ENCODE measurements at regions of chr13 and their contacts with region 1.

Region 1: GRCh38 chr13:26985285-26985878 is 186.2 kb downstream of the USP12 start:
- DNase-seq: peak; percentile 59 to 91 (median 74)
- H3K4me3 ChIP-seq: no peak overlapping the region
- H3K27ac ChIP-seq: no peak overlapping the region
- H3K4me1 ChIP-seq: no peaks in the 10 kb centered on the region
- H3K27me3 ChIP-seq: peaks cover 8% of the 10 kb centered on the region
- CTCF ChIP-seq: peak; percentile 50 to 94 (median 88)
- POLR2A ChIP-seq: no peak

Region 2: GRCh38 chr13:27006519-27007161 is 21.3 kb after region 1 on chr13:
- intact Hi-C with region 1: no loop called
- DNase-seq: peak in 1 of 7 donors; percentile 55
- H3K4me3 ChIP-seq: peak overlapping the region in 1 of 4 donors; percentile 42
- H3K27ac ChIP-seq: no peak overlapping the region
- H3K4me1 ChIP-seq: peaks cover 0 to 3% of the 10 kb centered on the region in 2 donors
- H3K27me3 ChIP-seq: peaks cover 18% of the 10 kb centered on the region
- CTCF ChIP-seq: no peak
- POLR2A ChIP-seq: no peak

Region 3: DNA sequence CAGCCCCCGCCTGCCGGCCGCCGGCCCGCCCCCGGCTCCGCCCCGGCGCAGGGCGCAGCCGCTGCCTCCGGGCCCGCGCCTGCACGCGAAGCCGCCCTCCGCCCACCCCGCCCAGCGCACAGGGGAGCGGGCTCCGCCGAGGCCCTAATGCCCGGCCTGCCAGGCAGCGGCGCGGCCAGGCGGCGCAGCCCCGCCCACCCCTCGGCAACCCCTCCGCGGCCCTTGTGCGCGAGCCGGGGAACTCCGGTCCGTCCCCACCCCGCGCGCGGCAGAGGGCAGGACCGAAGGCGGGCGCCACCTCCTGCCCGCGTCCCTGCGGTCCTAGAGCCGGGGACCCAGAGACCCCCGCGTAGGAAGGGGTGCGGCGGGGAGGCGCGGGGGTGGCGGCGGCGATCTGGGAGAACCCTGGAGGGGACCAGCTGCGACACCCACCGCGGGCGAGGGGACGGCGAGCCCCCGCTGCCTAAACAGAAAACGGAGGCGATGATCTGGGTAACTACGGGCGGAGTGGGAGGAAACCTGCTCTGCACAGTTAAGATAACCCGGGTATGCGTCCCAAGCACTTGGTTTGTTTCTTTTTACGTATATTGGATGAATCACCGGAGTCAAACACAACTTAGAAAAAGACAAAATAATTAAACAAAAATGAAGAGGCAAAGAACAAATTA is 186.6 kb after region 1 on chr13:
- intact Hi-C with region 1: loop called in 1 of 2 experiments (anchors 5 kb)
- DNase-seq: peak; percentile 89 to 95 (median 92)
- H3K4me3 ChIP-seq: peak overlapping the region; percentile 33 to 100 (median 80)
- H3K27ac ChIP-seq: peak overlapping the region; percentile 72 to 96 (median 90)
- H3K4me1 ChIP-seq: peaks cover 0 to 31% of the 10 kb centered on the region in 2 donors
- H3K27me3 ChIP-seq: no peaks in the 10 kb centered on the region
- CTCF ChIP-seq: peak in 2 of 6 experiments; percentile 5 to 14
- POLR2A ChIP-seq: peak in 1 of 2 donors; percentile 51

Region 4: DNA sequence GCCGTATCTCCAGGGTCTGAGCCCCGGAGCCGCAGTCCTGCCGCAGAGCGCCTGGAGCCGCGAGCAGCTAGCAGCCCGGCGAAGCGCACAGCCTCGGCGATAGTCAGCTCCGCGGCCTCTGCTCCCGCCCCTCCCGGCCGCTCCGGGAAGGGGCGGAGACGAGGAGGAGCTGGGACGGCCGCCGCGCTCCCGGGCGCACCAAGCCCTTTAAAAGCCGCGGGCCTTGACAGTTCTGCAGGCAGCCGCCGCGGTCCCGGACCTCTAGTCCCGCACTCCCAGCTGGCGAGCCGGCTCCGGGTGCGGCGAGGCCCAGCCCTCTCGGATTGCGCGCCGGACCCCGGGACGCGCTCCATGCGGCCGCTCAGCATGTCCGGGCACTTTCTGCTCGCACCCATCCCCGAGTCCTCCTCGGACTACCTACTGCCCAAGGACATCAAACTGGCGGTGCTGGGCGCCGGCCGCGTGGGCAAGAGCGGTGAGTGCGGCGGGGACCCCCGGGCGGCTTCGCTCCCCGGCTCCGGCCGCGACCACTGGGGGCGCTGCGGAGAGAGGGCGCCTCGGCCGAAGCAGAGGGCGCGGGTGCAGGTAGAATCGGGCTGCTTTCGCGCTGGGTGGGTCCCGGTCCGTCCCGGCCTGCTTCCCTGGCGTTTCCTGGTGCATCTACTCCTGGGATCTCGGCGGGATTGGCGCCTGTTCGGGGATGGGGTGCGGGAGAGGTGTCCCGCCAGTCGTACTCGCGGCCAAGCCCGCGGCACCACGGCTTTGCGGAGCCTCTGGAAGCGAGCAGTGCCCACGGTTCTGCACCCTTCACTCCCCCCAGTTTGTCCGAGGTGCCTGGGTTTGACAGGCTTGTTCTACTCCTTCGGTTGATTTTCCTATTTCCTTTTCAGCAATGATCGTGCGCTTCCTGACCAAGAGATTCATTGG is 285.5 kb after region 1 on chr13 and contains the start of gene RASL11A:
- intact Hi-C with region 1: loop called (anchors 10 kb)
- DNase-seq: peak; percentile 79 to 93 (median 86)
- H3K4me3 ChIP-seq: peak within 1 kb of the TSS; percentile 35 to 91 (median 50)
- H3K27ac ChIP-seq: peak within 1 kb of the TSS in 4 of 5 donors; percentile 75 to 91 (median 84)
- H3K4me1 ChIP-seq: peaks cover 7 to 16% of the 10 kb centered on the region in 2 donors
- H3K27me3 ChIP-seq: no peaks in the 10 kb centered on the region
- CTCF ChIP-seq: peak; percentile 65 to 97 (median 81)
- POLR2A ChIP-seq: peak; percentile 88 to 93
- total RNA-seq, gene RASL11A: 3.4 to 28.4 (median 6.8) TPM

Region 5: GRCh38 chr13:27362064-27362883 is 376.9 kb after region 1 on chr13:
- intact Hi-C with region 1: loop called (anchors 2 to 5 kb)
- DNase-seq: peak; percentile 67 to 94 (median 83)
- H3K4me3 ChIP-seq: peak overlapping the region in 2 of 4 donors; percentile 10 to 47
- H3K27ac ChIP-seq: no peak overlapping the region
- H3K4me1 ChIP-seq: peaks cover 0 to 6% of the 10 kb centered on the region in 2 donors
- H3K27me3 ChIP-seq: peaks cover 6% of the 10 kb centered on the region
- CTCF ChIP-seq: peak; percentile 82 to 93 (median 90)
- POLR2A ChIP-seq: no peak

Region 6: DNA sequence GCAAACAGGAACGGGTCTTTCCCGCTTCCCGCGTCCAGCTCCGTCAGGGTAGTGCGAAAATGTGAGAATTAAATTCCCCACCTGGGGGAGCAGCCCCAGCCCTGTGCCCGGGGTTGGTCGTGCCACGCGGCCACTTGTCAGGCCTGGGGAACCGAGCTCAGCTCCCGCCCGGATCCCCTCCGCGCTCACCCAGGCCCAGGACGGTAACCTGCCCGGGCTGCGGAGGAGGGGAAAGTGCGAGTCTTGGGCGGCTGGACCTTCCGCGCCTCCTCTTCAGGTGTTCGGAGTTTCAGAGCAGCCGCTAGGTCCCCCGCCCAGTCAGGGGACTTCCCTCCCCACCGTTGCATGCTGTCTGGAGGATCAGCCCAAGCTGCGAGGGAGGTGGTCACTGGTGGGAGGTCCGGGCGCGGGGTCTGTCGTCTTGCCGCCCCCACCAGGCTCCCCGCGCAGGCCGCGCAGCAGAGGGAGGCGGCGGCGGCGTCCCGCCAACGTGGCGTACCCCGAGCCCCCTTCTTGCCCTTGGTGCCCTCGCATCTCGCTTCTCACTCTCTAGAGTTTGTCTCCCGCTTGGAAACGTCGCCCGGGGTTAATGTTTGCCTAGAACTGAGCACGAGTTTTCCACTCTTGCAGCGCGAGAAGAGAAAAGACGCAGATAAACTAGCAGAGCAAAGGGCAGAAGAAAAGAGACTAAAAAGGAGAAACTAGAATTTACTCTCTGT is 995.1 kb after region 1 on chr13:
- intact Hi-C with region 1: loop called in 1 of 2 experiments (anchors 10 kb)
- DNase-seq: no peak
- H3K4me3 ChIP-seq: no peak overlapping the region
- H3K27ac ChIP-seq: no peak overlapping the region
- H3K4me1 ChIP-seq: no peaks in the 10 kb centered on the region
- H3K27me3 ChIP-seq: peaks cover 79% of the 10 kb centered on the region
- CTCF ChIP-seq: no peak
- POLR2A ChIP-seq: no peak